B cell (primary cell): ENCODE measurements at regions of chr1 and their contacts with region 1.

Region 1: DNA sequence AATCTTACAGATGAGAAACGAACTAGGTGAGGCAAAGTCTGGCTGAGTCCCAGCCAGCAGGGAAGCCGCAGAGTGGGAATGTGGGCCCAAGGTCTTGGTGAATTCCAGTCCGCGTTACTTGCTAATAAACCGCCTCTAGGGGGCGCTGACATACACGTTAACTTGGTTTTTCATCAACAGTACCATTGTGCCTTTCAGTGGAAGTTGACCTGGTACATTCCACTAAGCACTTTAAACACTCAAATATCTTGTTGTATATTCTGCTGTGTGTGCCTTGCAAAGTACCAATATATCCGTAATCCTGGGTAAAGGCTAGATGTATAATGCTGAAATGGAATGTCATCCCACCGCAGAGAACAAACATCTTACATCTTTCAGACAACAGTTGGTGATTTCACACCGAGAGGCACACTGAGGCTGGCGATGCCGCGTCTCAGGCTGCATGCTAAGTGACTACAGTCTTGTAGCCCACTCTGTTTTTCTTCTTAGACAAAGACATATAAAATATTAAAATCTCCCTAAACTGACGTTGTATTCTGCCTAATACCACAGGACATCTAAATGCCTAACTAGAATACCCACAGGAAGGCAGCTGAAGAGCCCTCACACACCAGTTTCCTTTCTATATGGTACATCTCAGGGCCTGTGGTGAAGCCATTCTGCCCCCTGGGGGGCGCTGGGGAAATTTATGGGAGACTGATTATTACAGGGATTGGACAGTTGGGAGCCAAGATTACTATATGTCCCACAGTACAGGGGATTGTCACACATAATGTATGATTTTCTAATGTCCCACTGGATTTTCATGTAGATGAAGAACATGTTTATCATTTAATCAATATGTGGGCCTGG is 49.2 kb upstream of the C1orf198 start:
- DNase-seq: peak; percentile 85
- ATAC-seq: peak; percentile 64
- H3K4me3 ChIP-seq: no peak overlapping the region
- H3K4me3 Mint-ChIP-seq: no peak overlapping the region
- H3K27ac ChIP-seq: peak overlapping the region in 1 of 2 donors; percentile 53
- H3K27ac Mint-ChIP-seq: no peak overlapping the region
- H3K4me1 ChIP-seq: no peaks in the 10 kb centered on the region
- H3K4me1 Mint-ChIP-seq: no peaks in the 10 kb centered on the region
- H3K27me3 ChIP-seq: no peaks in the 10 kb centered on the region
- H3K27me3 Mint-ChIP-seq: no peaks in the 10 kb centered on the region
- CTCF ChIP-seq: peak; percentile 91

Region 2: GRCh38 chr1:230758709-230759368 is 158.7 kb before region 1 on chr1:
- CTCF ChIA-PET with region 1: no interaction called
- POLR2A ChIA-PET with region 1: no interaction called
- intact Hi-C with region 1: no loop called
- DNase-seq: no peak
- ATAC-seq: no peak
- H3K4me3 ChIP-seq: no peak overlapping the region
- H3K4me3 Mint-ChIP-seq: no peak overlapping the region
- H3K27ac ChIP-seq: no peak overlapping the region
- H3K27ac Mint-ChIP-seq: no peak overlapping the region
- H3K4me1 ChIP-seq: no peaks in the 10 kb centered on the region
- H3K4me1 Mint-ChIP-seq: peaks cover 3% of the 10 kb centered on the region
- H3K27me3 ChIP-seq: peaks cover 0 to 9% (median 0%) of the 10 kb centered on the region in 4 experiments
- H3K27me3 Mint-ChIP-seq: peaks cover 29% of the 10 kb centered on the region
- CTCF ChIP-seq: no peak

Region 3: DNA sequence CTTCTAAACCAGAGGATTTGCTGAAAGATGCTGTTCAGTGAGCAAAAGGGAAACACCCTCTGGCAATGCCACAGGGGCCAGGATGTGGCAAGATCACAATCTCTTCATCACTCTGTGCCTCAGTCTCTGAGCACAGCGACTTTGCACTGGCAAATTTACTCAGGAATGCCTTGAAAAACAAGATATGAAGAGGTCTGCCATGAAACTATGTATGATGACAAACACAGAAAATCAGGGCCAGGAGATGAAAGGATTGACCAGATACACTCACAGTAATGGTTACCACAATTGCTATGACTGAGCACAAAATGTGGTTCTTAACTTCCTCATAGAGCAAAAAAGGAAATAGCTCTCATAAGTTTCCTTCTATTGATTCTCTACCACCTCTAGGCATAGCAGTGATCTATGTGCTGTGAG is 55.4 kb after region 1 on chr1:
- CTCF ChIA-PET with region 1: interaction called, 14 read pairs
- POLR2A ChIA-PET with region 1: no interaction called
- intact Hi-C with region 1: no loop called
- DNase-seq: peak; percentile 66
- ATAC-seq: peak; percentile 76
- H3K4me3 ChIP-seq: peak overlapping the region in 2 of 5 experiments; percentile 16 to 42
- H3K4me3 Mint-ChIP-seq: peak overlapping the region; percentile 70
- H3K27ac ChIP-seq: peak overlapping the region; percentile 19 to 51
- H3K27ac Mint-ChIP-seq: peak overlapping the region; percentile 91
- H3K4me1 ChIP-seq: peaks cover 34 to 61% of the 10 kb centered on the region in 2 donors
- H3K4me1 Mint-ChIP-seq: peaks cover 68% of the 10 kb centered on the region
- H3K27me3 ChIP-seq: no peaks in the 10 kb centered on the region
- H3K27me3 Mint-ChIP-seq: no peaks in the 10 kb centered on the region
- CTCF ChIP-seq: no peak

Region 4: DNA sequence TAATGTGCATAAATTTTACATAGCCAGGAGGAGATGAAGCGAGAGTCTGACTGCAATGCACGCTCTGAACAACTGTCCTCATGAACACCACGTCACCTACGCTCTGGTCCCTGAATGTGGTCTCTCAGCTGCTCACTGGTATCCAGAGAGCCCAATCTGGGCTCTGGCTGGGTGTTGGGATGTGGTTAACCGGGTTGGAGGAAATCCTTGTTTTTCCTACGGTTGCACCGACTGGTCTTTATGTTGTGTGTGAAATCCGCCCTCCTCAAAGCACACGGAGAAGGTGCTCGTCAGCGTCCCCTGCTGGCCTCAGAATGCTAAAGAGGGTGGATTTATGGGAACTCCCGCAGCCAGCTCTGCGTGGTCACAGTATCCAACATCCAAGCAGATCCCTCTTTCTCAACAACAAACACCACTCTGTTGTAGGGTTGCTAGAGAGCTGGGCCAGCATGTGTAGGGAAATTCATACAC is 174.4 kb after region 1 on chr1:
- CTCF ChIA-PET with region 1: interaction called, 8 read pairs
- POLR2A ChIA-PET with region 1: no interaction called
- intact Hi-C with region 1: loop called (anchors 1 kb)
- DNase-seq: peak; percentile 26
- ATAC-seq: no peak
- H3K4me3 ChIP-seq: no peak overlapping the region
- H3K4me3 Mint-ChIP-seq: no peak overlapping the region
- H3K27ac ChIP-seq: no peak overlapping the region
- H3K27ac Mint-ChIP-seq: no peak overlapping the region
- H3K4me1 ChIP-seq: no peaks in the 10 kb centered on the region
- H3K4me1 Mint-ChIP-seq: no peaks in the 10 kb centered on the region
- H3K27me3 ChIP-seq: peaks cover 0 to 9% (median 1%) of the 10 kb centered on the region in 4 experiments
- H3K27me3 Mint-ChIP-seq: peaks cover 37% of the 10 kb centered on the region
- CTCF ChIP-seq: peak; percentile 22

Region 5: DNA sequence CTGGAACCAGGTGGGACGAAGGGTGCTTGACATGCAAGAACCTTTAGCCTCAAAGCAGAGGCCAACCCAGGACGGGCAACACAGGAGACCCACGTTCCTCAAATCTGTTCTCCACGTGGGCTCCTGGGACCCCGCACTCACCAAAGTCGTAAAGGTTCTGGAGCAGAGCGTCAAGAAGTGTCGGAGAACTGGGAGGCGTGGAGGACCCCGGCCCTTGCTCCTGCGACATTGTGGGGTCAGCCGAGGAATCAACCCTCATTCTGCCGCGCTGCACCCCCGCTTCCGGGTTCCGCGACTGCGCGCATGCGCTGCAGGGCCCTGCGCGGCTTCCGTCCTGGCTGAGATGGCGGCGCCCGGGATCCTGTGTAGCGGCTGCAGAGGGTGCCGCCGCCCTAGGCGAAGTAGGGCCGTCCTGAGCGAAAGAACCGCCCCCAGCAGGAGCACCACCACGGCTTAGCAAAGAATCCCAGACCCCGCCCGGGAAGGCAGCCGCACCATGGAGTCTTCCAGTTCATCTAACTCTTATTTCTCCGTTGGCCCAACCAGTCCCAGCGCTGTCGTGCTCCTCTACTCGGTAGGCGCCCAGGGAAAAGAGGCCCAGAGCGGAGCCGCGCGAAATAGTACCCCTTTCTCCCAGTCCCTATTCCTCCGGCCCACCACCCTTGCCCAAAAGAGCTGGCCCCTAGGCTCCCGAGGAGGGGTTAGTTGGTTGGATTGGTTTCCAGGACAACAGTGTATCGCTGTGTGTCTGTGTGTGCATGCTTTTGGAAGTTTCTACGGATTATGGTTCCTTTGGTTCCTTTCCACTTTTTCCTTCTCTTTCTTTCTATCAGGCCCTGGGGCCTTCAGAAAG is 323.6 kb after region 1 on chr1 and contains the start of gene GNPAT:
- CTCF ChIA-PET with region 1: no interaction called
- POLR2A ChIA-PET with region 1: no interaction called
- intact Hi-C with region 1: loop called (anchors 1 kb)
- DNase-seq: peak; percentile 93
- ATAC-seq: peak; percentile 96
- H3K4me3 ChIP-seq: peak within 1 kb of the TSS; percentile 78 to 92 (median 88)
- H3K4me3 Mint-ChIP-seq: peak within 1 kb of the TSS; percentile 96
- H3K27ac ChIP-seq: peak within 1 kb of the TSS; percentile 76 to 87
- H3K27ac Mint-ChIP-seq: peak within 1 kb of the TSS; percentile 95
- H3K4me1 ChIP-seq: peaks cover 23 to 29% of the 10 kb centered on the region in 2 donors
- H3K4me1 Mint-ChIP-seq: peaks cover 68% of the 10 kb centered on the region
- H3K27me3 ChIP-seq: no peaks in the 10 kb centered on the region
- H3K27me3 Mint-ChIP-seq: no peaks in the 10 kb centered on the region
- CTCF ChIP-seq: no peak
- total RNA-seq, gene GNPAT: 48.0 and 49.0 TPM in 2 replicates